ENCODE measurements at regions of chr1 and their contacts with region 1.

Region 1: DNA sequence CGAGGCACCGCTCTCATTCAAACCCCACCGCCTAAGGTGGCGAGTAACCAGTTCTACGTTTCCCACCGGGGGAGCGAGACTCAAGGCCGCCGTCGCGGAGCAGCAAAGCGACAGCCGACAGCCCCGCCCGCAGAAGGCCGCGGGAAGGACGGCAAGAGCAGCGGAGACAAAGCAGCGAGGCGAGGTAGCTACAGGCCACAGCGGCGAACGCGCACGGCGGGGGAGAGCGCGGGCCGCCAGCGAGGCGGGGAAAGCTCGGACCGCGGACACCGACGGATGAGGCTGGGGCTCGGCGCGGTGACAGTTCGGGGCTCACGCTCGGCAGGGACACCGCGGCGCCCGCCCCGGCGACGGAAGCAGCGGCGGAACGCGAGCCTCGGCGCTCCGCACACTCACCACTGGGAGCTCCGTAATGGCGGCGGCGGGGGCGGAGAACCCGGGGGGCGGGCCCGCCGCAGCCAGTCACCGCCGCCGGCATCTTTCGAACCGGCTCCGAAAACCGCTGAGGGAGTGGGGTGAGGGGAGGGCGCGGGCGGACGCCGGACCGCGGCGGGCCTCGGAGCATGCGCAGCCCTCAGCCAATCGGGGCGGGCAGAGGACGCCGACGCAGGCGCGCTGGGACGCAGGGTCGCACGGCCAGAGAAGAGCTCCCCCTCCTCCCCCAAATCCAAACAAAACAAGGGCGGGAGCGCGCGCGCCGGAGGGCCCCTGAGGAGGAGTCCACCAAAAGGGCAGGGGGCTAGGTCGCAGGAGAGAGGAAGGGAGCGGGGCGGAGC is 666 bp downstream of the HP1BP3 start:
- DNase-seq: peak; percentile 98
- ATAC-seq: peak; percentile 72
- H3K4me3 ChIP-seq: peak overlapping the region; percentile 78 to 92 (median 82)
- H3K4me3 Mint-ChIP-seq: peak overlapping the region; percentile 99
- H3K27ac ChIP-seq: peak overlapping the region; percentile 81 to 91
- H3K27ac Mint-ChIP-seq: peak overlapping the region; percentile 98
- H3K4me1 ChIP-seq: peaks cover 19 to 33% of the 10 kb centered on the region in 2 donors
- H3K4me1 Mint-ChIP-seq: peaks cover 39% of the 10 kb centered on the region
- H3K27me3 ChIP-seq: no peaks in the 10 kb centered on the region
- H3K27me3 Mint-ChIP-seq: no peaks in the 10 kb centered on the region
- CTCF ChIP-seq: no peak

Region 2: GRCh38 chr1:19882111-19883071 is 904.0 kb before region 1 on chr1 and contains the start of gene OTUD3:
- CTCF ChIA-PET with region 1: no interaction called
- POLR2A ChIA-PET with region 1: no interaction called
- intact Hi-C with region 1: loop called (anchors 10 kb)
- DNase-seq: peak; percentile 98
- ATAC-seq: peak; percentile 96
- H3K4me3 ChIP-seq: peak within 1 kb of the TSS; percentile 68 to 84 (median 81)
- H3K4me3 Mint-ChIP-seq: peak within 1 kb of the TSS; percentile 83
- H3K27ac ChIP-seq: peak within 1 kb of the TSS; percentile 62 to 80
- H3K27ac Mint-ChIP-seq: peak within 1 kb of the TSS; percentile 68
- H3K4me1 ChIP-seq: peaks cover 12 to 14% of the 10 kb centered on the region in 2 donors
- H3K4me1 Mint-ChIP-seq: peaks cover 27% of the 10 kb centered on the region
- H3K27me3 ChIP-seq: peaks cover 0 to 10% (median 4%) of the 10 kb centered on the region in 4 experiments
- H3K27me3 Mint-ChIP-seq: peaks cover 3% of the 10 kb centered on the region
- CTCF ChIP-seq: peak; percentile 81
- total RNA-seq, gene OTUD3: 19.0 and 19.6 TPM in 2 replicates

Region 3: DNA sequence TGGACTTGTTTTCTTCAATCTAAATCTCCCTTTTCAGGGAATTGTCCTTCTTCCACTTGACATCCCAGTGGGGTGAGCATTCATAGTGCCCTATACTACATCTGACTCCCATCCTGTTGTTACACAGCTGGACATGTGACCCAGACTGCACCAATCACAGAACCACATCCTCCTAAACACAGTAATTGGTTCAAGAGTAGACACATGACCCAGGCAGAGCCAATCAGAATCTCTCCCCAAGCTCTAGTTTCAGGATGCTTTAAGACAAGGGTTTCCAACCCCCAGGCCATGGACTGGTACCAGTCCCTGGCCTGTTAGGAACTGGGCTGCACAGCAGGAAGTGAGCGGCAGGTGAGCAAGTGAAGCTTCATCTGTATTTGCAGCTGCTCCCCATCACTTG is 119.6 kb before region 1 on chr1:
- CTCF ChIA-PET with region 1: no interaction called
- POLR2A ChIA-PET with region 1: no interaction called
- intact Hi-C with region 1: no loop called
- DNase-seq: no peak
- ATAC-seq: no peak
- H3K4me3 ChIP-seq: no peak overlapping the region
- H3K4me3 Mint-ChIP-seq: no peak overlapping the region
- H3K27ac ChIP-seq: no peak overlapping the region
- H3K27ac Mint-ChIP-seq: no peak overlapping the region
- H3K4me1 ChIP-seq: peaks cover 5 to 8% of the 10 kb centered on the region in 2 donors
- H3K4me1 Mint-ChIP-seq: peaks cover 10% of the 10 kb centered on the region
- H3K27me3 ChIP-seq: peaks cover 0 to 2% (median 0%) of the 10 kb centered on the region in 4 experiments
- H3K27me3 Mint-ChIP-seq: no peaks in the 10 kb centered on the region
- CTCF ChIP-seq: no peak

Region 4: DNA sequence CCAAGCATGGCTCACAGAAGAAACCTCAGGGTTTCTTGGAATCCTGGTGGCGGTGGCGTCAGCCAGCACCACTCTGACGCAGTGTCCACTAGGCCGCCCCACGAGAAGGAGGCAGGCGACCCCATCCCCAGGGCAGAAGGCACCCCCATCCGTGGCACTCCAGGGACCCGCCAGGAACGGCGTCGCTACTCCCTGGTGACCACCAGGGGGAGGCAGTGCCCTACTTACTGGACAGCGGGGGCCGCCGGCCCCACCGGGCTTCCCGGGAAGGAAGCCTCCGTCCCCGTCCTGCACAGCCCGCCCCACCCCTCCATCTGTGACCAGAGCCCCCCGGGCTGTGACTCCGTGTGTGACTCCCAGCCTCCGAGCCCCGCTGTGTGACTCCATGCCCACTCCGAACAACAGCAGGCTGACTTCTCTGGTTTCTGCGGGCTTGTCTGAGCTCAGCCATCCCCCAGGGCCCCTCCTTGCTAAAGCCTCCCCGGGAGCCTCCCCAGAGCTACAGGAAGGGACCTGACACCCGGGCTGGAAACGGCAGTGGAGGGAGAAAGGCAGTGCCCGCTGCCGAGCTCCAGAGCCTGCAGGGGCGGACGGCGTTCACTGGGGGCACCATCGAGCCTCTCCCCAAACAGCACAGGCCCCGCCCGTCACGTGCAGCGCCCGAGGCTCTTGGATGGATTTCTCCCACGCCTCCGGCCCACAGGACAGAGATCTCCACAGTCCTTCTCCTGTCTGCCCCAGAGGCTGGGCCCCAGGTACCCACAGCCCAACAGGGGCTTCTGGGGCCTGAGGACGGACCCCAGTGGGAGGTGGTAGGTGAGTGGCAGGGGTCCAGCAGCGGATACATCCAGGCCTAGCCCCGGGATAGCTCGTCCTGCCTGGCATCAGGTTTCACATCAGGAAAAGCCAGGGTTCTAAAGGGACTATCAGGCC is 89.8 kb before region 1 on chr1:
- CTCF ChIA-PET with region 1: interaction called, 4 read pairs
- POLR2A ChIA-PET with region 1: no interaction called
- intact Hi-C with region 1: loop called (anchors 1 kb)
- DNase-seq: peak; percentile 83
- ATAC-seq: peak; percentile 94
- H3K4me3 ChIP-seq: peak overlapping the region; percentile 42 to 82 (median 79)
- H3K4me3 Mint-ChIP-seq: peak overlapping the region; percentile 91
- H3K27ac ChIP-seq: no peak overlapping the region
- H3K27ac Mint-ChIP-seq: no peak overlapping the region
- H3K4me1 ChIP-seq: peaks cover 0 to 8% of the 10 kb centered on the region in 2 donors
- H3K4me1 Mint-ChIP-seq: peaks cover 4% of the 10 kb centered on the region
- H3K27me3 ChIP-seq: no peaks in the 10 kb centered on the region
- H3K27me3 Mint-ChIP-seq: no peaks in the 10 kb centered on the region
- CTCF ChIP-seq: peak; percentile 98

Region 5: DNA sequence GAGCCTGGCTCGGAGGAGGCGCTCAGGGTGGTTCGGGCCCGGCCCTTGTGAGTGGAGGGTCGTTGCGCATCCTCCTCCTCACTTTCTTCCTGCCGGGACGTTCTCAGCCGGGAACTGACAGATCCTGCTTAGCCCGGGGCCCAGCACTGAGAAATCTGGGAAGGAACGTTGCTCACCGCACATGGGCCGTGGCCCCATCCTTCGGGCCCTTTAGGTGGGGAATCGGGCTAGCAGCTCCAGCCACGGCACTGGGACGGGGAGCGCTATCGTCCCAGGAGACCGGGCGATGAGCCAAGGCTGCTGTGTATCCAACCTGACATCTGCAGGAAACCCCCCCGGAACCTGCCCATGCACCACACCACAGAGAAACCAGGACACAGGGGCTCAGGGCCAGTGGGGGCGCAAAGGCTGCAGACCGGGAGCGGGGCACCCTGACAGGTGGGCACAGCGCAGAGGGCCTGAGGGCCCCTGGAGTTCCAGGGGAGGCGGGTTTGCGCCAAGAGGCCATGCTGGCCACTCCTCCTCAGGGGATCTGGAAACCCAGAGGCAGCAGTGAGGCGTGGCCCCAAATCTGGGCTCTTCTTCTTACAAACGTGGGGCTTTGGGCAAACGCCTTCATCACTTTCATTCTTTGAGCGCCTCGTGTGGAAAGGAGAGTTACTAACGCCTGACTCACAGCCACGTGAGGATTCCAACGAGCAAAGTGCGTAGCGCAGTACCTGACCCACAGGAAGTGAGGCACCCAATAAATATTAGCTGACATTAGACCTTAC is 53.7 kb before region 1 on chr1 and contains the start of gene SH2D5:
- CTCF ChIA-PET with region 1: no interaction called
- POLR2A ChIA-PET with region 1: interaction called, 5 read pairs
- intact Hi-C with region 1: loop called (anchors 2 kb)
- DNase-seq: peak; percentile 84
- ATAC-seq: peak; percentile 70
- H3K4me3 ChIP-seq: peak within 1 kb of the TSS; percentile 22 to 70 (median 60)
- H3K4me3 Mint-ChIP-seq: peak within 1 kb of the TSS; percentile 94
- H3K27ac ChIP-seq: no peak within 1 kb of the TSS
- H3K27ac Mint-ChIP-seq: peak within 1 kb of the TSS; percentile 86
- H3K4me1 ChIP-seq: peaks cover 27 to 30% of the 10 kb centered on the region in 2 donors
- H3K4me1 Mint-ChIP-seq: peaks cover 19% of the 10 kb centered on the region
- H3K27me3 ChIP-seq: peaks cover 0 to 35% (median 13%) of the 10 kb centered on the region in 4 experiments
- H3K27me3 Mint-ChIP-seq: peaks cover 13% of the 10 kb centered on the region
- CTCF ChIP-seq: peak; percentile 62
- total RNA-seq, gene SH2D5: 0.29 and 0.30 TPM in 2 replicates

Region 6: GRCh38 chr1:21176586-21177555 is 390.4 kb after region 1 on chr1 and contains the start of gene EIF4G3:
- CTCF ChIA-PET with region 1: no interaction called
- POLR2A ChIA-PET with region 1: interaction called, 6 read pairs
- intact Hi-C with region 1: loop called (anchors 1 kb)
- DNase-seq: peak; percentile 99
- ATAC-seq: peak; percentile 93
- H3K4me3 ChIP-seq: peak within 1 kb of the TSS; percentile 76 to 96 (median 83)
- H3K4me3 Mint-ChIP-seq: peak within 1 kb of the TSS; percentile 97
- H3K27ac ChIP-seq: peak within 1 kb of the TSS; percentile 73 to 89
- H3K27ac Mint-ChIP-seq: peak within 1 kb of the TSS; percentile 96
- H3K4me1 ChIP-seq: peaks cover 16 to 23% of the 10 kb centered on the region in 2 donors
- H3K4me1 Mint-ChIP-seq: peaks cover 29% of the 10 kb centered on the region
- H3K27me3 ChIP-seq: no peaks in the 10 kb centered on the region
- H3K27me3 Mint-ChIP-seq: no peaks in the 10 kb centered on the region
- CTCF ChIP-seq: no peak
- total RNA-seq, gene EIF4G3: 76.0 and 80.9 TPM in 2 replicates

Measured in B cell (primary cell).